Activated CD4-positive, alpha-beta T cell treated with anti-CD3 and anti-CD28 coated beads, Interleukin-2, amount 10 ng/mL, durations not matched to agents 24 days and 14 days (primary cell): ENCODE measurements at regions of chr1 and their contacts with region 1.

Region 1: DNA sequence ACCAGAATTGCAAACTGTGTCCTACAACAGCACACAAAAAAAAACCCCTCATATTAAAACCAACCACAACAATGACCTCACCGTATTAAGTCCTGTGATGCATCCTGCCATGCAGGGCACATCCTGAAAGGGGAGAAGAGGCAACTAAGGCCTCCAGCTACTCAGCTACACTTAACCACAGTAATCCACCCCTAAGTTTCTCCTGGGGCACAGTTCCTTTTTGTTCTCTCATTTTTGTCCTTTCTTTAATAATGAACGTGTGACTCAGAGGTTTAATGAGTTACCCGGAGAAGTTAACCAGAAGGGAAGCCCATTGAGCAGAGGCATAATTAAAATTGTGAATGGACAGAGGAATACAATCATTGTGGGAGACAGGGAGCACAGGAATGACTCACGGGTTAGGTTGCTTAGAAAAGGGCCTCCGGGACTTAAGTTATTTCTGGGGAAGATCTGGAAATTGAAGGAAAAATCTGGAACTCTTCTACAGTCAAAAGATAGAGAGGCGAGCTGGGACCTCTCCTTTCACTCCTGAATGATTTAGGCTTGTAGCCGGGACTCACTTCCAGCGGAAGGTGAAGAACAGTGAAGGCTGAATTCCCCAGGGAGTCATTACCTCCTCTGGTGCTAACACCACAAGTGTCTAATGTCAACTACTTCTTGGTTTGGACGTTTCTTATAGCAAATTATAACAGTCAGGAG is 36.9 kb upstream of the HIVEP3 start:
- DNase-seq: no peak
- H3K4me3 Mint-ChIP-seq: no peak overlapping the region
- H3K27ac Mint-ChIP-seq: no peak overlapping the region
- H3K4me1 Mint-ChIP-seq: peaks cover 15% of the 10 kb centered on the region
- H3K27me3 Mint-ChIP-seq: no peaks in the 10 kb centered on the region

Region 2: GRCh38 chr1:41773144-41773591 is 182.4 kb before region 1 on chr1:
- intact Hi-C with region 1: no loop called
- DNase-seq: no peak
- H3K4me3 Mint-ChIP-seq: no peak overlapping the region
- H3K27ac Mint-ChIP-seq: no peak overlapping the region
- H3K4me1 Mint-ChIP-seq: peaks cover 3% of the 10 kb centered on the region
- H3K27me3 Mint-ChIP-seq: no peaks in the 10 kb centered on the region

Region 3: DNA sequence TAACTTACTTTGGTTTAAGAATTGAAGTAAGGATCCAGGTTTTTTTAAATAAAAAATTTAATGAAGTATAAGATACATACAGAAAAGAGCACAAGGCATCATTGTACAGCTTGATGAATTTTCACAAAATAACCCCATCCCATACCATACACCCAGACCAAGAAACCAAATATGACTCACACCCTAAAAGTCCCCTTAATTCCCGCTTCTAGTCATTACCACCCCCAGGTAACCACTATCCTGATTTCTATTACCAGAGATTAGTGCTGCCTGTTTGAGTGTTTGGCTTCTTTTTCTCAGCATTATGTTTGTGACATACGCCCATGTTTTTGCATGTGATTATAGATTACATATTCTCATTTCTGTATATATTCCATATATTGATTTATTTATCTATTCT is 61.6 kb after region 1 on chr1:
- intact Hi-C with region 1: loop called (anchors 1 kb)
- DNase-seq: peak; percentile 51
- H3K4me3 Mint-ChIP-seq: no peak overlapping the region
- H3K27ac Mint-ChIP-seq: no peak overlapping the region
- H3K4me1 Mint-ChIP-seq: peaks cover 21% of the 10 kb centered on the region
- H3K27me3 Mint-ChIP-seq: peaks cover under 1% of the 10 kb centered on the region